ENCODE measurements at regions of chr18 and their contacts with region 1.

Region 1: DNA sequence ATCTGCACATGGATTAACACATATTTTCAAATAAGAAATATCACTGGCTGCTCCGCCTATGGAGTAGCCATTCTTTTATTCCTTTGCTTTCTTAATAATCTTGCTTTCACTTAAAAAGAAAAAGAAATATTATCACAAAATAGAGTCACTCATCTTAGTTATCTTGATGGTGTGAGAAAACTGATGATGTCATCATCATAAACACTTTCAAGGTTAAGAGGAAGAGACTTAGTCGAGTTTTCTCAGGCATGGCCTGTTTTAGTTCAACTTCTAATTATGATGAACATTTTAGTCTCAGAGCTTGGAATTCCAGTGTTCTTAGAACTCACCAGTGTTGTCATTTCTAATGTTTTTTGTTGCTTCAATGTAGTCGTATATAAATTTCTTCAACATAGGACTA is 506.1 kb downstream of the PTPRM start:
- DNase-seq: no peak
- ATAC-seq: no peak
- H3K4me3 ChIP-seq: no peak overlapping the region
- H3K4me3 Mint-ChIP-seq: no peak overlapping the region
- H3K27ac ChIP-seq: no peak overlapping the region
- H3K27ac Mint-ChIP-seq: no peak overlapping the region
- H3K4me1 ChIP-seq: no peaks in the 10 kb centered on the region
- H3K4me1 Mint-ChIP-seq: no peaks in the 10 kb centered on the region
- H3K27me3 ChIP-seq: no peaks in the 10 kb centered on the region
- H3K27me3 Mint-ChIP-seq: no peaks in the 10 kb centered on the region
- CTCF ChIP-seq: no peak

Region 2: DNA sequence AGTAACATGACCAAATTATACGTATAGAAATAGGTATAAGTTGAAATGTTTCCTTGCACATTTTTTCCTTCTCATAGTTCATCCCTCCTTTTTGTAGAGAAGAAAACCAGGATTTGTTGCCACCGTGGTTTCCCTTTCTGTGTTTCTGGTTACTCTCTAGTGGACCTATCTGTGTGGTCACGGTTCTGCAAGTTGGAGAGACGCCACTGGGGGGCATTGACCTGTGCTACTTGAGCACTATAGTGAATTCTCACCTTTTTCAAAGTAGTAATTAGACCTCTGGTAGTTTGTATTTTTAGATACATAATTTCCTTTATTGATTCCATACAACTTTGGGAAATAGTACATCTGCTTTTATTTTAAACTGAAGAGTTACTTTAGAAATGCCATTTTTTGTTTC is 61.3 kb before region 1 on chr18:
- CTCF ChIA-PET with region 1: no interaction called
- POLR2A ChIA-PET with region 1: no interaction called
- intact Hi-C with region 1: loop called (anchors 10 kb)
- DNase-seq: no peak
- ATAC-seq: no peak
- H3K4me3 ChIP-seq: no peak overlapping the region
- H3K4me3 Mint-ChIP-seq: no peak overlapping the region
- H3K27ac ChIP-seq: no peak overlapping the region
- H3K27ac Mint-ChIP-seq: no peak overlapping the region
- H3K4me1 ChIP-seq: no peaks in the 10 kb centered on the region
- H3K4me1 Mint-ChIP-seq: no peaks in the 10 kb centered on the region
- H3K27me3 ChIP-seq: no peaks in the 10 kb centered on the region
- H3K27me3 Mint-ChIP-seq: no peaks in the 10 kb centered on the region
- CTCF ChIP-seq: no peak

Measured in B cell (primary cell).